Panc1 (cell line): ENCODE measurements at regions of chr5 and their contacts with region 1.

Region 1: GRCh38 chr5:43040287-43041098 is at the start of gene ANXA2R:
- DNase-seq: peak; percentile 98
- ATAC-seq: peak; percentile 61
- H3K4me3 ChIP-seq: peak within 1 kb of the TSS; percentile 58 to 77
- H3K27ac ChIP-seq: peak within 1 kb of the TSS; percentile 99
- H3K4me1 ChIP-seq: peaks cover 18% of the 10 kb centered on the region
- H3K27me3 ChIP-seq: no peaks in the 10 kb centered on the region
- CTCF ChIP-seq: peak; percentile 94
- total RNA-seq, gene ANXA2R: 6.2 TPM

Region 2: GRCh38 chr5:42908509-42909488 is 131.7 kb before region 1 on chr5:
- CTCF ChIA-PET with region 1: interaction called, 8 read pairs
- POLR2A ChIA-PET with region 1: interaction called, 6 read pairs
- in situ Hi-C with region 1: no loop called
- intact Hi-C with region 1: loop called (anchors 10 kb)
- DNase-seq: peak; percentile 89
- ATAC-seq: peak; percentile 93
- H3K4me3 ChIP-seq: peak overlapping the region; percentile 56 to 79
- H3K27ac ChIP-seq: peak overlapping the region; percentile 75
- H3K4me1 ChIP-seq: peaks cover 8% of the 10 kb centered on the region; the same call in 1 of the 2 replicates
- H3K27me3 ChIP-seq: peaks cover 11% of the 10 kb centered on the region
- CTCF ChIP-seq: peak; percentile 94

Region 3: DNA sequence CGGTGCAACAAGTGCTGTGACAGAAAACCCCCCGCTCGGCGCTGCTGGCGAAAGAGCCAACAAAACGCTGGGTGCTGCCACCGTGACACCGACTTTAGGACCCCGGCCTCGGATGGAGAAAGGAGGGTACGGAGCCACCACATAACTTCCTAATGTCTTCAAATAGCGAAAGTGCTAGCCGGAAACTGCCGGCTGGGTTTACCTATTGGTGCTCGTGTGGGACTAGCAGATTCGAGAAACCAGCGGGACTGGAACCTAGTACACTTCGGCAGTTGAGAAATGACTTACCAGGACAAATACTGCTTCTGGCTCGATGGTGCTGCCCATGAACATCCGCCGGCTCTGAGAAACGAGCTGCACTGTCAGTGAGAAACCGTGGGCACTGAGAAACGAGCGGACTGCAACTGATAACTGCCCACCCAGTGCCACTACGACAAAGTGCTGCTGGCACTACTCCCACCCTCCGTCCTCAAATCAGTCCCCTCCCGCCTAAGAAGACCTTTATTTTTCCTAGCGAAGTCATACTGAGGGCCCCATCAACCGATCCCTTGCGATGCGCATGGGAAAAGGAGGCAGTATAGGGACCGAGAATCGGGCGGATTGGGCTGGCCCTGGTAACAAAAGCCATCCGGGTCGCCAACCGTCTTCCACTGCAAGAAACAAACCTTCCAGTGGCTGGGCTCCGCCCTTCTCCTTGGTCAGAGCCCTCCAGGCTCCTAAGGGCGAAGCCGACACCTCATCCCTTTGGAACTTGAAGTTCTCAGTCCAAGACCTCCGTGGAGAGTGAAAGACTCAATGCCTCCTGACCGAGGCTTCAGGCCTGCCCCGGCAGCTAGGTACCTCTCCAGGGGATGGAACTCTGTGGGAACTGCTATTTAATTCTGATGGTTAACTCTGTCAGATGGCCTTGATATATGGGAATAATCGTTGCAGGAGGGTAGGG is 26.6 kb after region 1 on chr5:
- CTCF ChIA-PET with region 1: interaction called, 9 read pairs
- POLR2A ChIA-PET with region 1: interaction called, 10 read pairs
- in situ Hi-C with region 1: no loop called
- intact Hi-C with region 1: loop called (anchors 2 kb)
- DNase-seq: peak; percentile 86
- ATAC-seq: peak; percentile 74
- H3K4me3 ChIP-seq: peak overlapping the region; percentile 62 to 94
- H3K27ac ChIP-seq: peak overlapping the region; percentile 100
- H3K4me1 ChIP-seq: peaks cover 13% of the 10 kb centered on the region
- H3K27me3 ChIP-seq: no peaks in the 10 kb centered on the region
- CTCF ChIP-seq: no peak

Region 4: DNA sequence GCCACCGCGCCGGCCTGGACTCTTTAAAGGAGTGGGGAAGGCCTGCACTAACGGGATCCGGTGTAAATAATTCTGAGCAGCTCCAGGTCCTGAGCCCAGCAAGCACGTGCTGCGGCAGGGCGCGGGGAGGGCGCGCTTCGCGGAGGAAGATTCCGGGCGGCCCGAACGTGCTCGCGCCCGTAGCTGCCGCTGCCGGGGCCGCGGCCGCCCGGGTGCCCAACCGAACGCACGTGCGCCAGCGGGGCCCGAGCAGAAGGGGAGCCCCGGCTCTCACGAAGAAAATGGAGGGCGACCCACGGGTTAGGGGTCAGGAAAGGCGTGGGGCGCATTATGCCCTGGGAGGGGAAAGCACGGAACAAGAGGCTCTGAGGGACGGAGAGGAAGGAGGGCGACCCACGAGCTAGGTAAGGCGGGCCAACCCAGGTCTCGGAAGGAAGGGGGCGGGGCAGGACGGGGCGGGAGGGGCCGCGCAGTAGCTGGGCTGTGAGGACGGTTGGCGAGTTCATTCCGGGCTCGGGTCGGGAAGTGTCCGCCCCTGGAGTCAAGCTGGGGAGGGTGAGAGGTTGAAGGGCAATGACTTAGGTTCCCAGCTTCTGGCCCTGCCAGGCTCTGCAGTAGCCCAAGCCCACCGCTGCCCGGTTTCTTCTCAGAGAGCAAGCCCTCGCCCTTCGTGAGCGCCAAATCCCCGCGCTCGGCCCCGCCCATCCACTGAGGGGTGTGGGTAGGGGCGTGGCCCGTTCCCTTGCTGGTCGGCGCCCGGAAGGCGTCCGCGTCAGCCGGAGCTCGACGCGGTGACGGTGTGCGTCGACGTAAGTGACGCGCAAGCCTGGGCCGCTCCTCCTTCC is 80.4 kb after region 1 on chr5 and contains the start of gene ZNF131:
- CTCF ChIA-PET with region 1: no interaction called
- POLR2A ChIA-PET with region 1: interaction called, 18 read pairs
- in situ Hi-C with region 1: no loop called
- intact Hi-C with region 1: no loop called
- DNase-seq: peak; percentile 94
- ATAC-seq: peak; percentile 99
- H3K4me3 ChIP-seq: peak within 1 kb of the TSS; percentile 84 to 96
- H3K27ac ChIP-seq: peak within 1 kb of the TSS; percentile 95
- H3K4me1 ChIP-seq: peaks cover 16% of the 10 kb centered on the region
- H3K27me3 ChIP-seq: no peaks in the 10 kb centered on the region
- CTCF ChIP-seq: no peak
- total RNA-seq, gene ZNF131: 47.3 TPM

Region 5: DNA sequence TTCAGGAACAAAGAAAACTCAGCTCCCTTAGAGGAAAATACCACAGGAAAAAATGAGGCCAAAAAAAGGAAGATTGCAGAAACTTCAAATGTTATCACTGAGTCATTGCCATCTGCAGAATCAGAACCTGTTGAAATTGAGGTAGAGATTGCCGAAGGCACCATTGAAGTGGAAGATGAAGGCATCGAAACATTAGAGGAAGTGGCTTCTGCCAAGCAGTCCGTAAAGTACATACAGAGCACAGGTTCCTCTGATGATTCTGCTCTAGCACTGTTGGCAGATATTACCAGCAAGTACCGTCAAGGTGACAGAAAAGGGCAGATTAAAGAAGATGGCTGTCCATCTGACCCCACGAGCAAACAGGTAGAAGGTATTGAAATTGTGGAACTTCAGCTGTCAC is 120.8 kb after region 1 on chr5:
- CTCF ChIA-PET with region 1: interaction called, 15 read pairs
- POLR2A ChIA-PET with region 1: no interaction called
- in situ Hi-C with region 1: no loop called
- intact Hi-C with region 1: no loop called
- DNase-seq: no peak
- ATAC-seq: no peak
- H3K4me3 ChIP-seq: no peak overlapping the region
- H3K27ac ChIP-seq: no peak overlapping the region
- H3K4me1 ChIP-seq: no peaks in the 10 kb centered on the region
- H3K27me3 ChIP-seq: no peaks in the 10 kb centered on the region
- CTCF ChIP-seq: no peak